ENCODE measurements at regions of chr13 and their contacts with region 1.

Region 1: GRCh38 chr13:77492982-77493381 is 42.5 kb upstream of the SCEL start:
- DNase-seq: peak in 4 of 7 donors; percentile 17 to 48 (median 24)
- H3K4me3 ChIP-seq: no peak overlapping the region
- H3K27ac ChIP-seq: no peak overlapping the region
- H3K4me1 ChIP-seq: peaks cover 0 to 9% of the 10 kb centered on the region in 2 donors
- H3K27me3 ChIP-seq: no peaks in the 10 kb centered on the region
- CTCF ChIP-seq: peak; percentile 21 to 68 (median 56)
- POLR2A ChIP-seq: no peak

Region 2: DNA sequence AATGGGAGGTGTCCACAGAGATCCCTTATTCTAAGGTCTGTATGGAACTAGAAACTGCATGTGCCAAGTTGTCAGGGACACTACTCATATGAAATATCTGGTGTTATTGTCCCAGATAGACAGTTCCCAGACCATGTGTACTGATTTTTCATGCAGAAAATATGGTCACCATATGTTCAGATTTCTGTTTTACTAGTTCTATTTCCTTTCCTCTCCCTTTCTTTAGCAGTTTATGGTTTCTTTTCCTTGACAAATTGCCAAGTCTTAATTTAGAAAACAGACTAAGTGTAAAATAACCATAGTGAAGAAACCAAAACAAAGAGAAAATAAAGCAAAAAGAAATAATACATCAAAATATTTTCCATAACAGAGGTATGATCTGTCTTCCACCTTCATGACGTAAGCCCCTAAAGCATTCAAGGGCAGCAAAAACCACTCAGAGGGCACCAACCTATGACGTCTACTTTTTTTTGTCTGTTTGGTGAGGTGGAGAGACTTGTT is 855.3 kb before region 1 on chr13:
- intact Hi-C with region 1: no loop called
- DNase-seq: no peak
- H3K4me3 ChIP-seq: no peak overlapping the region
- H3K27ac ChIP-seq: no peak overlapping the region
- H3K4me1 ChIP-seq: peaks cover 0 to 8% of the 10 kb centered on the region in 2 donors
- H3K27me3 ChIP-seq: no peaks in the 10 kb centered on the region
- CTCF ChIP-seq: no peak
- POLR2A ChIP-seq: no peak

Region 3: GRCh38 chr13:77184455-77184854 is 308.5 kb before region 1 on chr13:
- intact Hi-C with region 1: no loop called
- DNase-seq: no peak
- H3K4me3 ChIP-seq: no peak overlapping the region
- H3K27ac ChIP-seq: no peak overlapping the region
- H3K4me1 ChIP-seq: no peaks in the 10 kb centered on the region
- H3K27me3 ChIP-seq: no peaks in the 10 kb centered on the region
- CTCF ChIP-seq: no peak
- POLR2A ChIP-seq: no peak

Region 4: DNA sequence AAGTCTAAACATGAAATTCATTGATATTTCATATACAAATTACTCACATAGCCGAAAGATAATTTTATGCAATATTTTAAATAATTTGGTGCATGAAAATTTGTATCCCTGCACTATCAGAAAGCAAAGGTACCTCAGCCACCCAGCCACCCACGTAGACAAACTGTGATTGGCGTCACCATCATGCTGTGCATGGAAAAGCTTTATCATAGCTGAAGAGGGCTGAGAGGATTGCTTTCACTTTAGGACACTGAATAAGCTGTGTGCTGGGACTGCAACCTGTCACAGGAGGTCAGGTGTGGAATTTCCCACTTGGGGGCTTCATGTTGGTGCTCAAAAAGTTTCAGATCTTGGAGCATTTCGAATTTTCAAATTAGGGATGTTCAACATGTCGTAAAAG is 262.4 kb before region 1 on chr13:
- intact Hi-C with region 1: no loop called
- DNase-seq: no peak
- H3K4me3 ChIP-seq: no peak overlapping the region
- H3K27ac ChIP-seq: no peak overlapping the region
- H3K4me1 ChIP-seq: no peaks in the 10 kb centered on the region
- H3K27me3 ChIP-seq: no peaks in the 10 kb centered on the region
- CTCF ChIP-seq: no peak
- POLR2A ChIP-seq: no peak

Region 5: GRCh38 chr13:77409412-77409811 is 83.6 kb before region 1 on chr13:
- intact Hi-C with region 1: no loop called
- DNase-seq: no peak
- H3K4me3 ChIP-seq: no peak overlapping the region
- H3K27ac ChIP-seq: no peak overlapping the region
- H3K4me1 ChIP-seq: no peaks in the 10 kb centered on the region
- H3K27me3 ChIP-seq: no peaks in the 10 kb centered on the region
- CTCF ChIP-seq: no peak
- POLR2A ChIP-seq: no peak

Region 6: DNA sequence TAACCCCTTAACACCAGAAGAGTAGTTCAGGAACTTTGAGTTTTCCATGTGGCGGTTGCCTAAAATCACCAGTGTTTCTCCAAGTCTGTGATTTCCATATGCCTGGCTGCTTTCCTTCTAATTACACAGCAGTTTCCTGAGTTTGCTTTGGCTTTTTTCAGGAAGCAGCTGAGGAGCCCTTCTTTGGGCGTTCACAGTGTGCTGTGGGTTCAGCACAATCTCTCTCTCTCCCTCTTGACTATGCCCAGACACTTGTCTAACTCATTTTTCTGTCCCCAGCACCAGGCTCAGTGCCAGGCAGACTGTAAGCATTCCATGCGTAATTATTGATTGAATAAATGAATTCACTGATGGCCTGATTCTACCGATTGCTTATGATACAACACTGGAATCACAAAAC is 62.3 kb after region 1 on chr13:
- intact Hi-C with region 1: loop called (anchors 5 kb)
- DNase-seq: no peak
- H3K4me3 ChIP-seq: no peak overlapping the region
- H3K27ac ChIP-seq: no peak overlapping the region
- H3K4me1 ChIP-seq: no peaks in the 10 kb centered on the region
- H3K27me3 ChIP-seq: no peaks in the 10 kb centered on the region
- CTCF ChIP-seq: no peak
- POLR2A ChIP-seq: no peak

Region 7: GRCh38 chr13:77563113-77563512 is 70.1 kb after region 1 on chr13:
- intact Hi-C with region 1: loop called (anchors 5 kb)
- DNase-seq: no peak
- H3K4me3 ChIP-seq: no peak overlapping the region
- H3K27ac ChIP-seq: no peak overlapping the region
- H3K4me1 ChIP-seq: no peaks in the 10 kb centered on the region
- H3K27me3 ChIP-seq: no peaks in the 10 kb centered on the region
- CTCF ChIP-seq: no peak
- POLR2A ChIP-seq: no peak